ENCODE measurements at regions of chr2 and their contacts with region 1.

Region 1: GRCh38 chr2:182666674-182667314 is 49.3 kb upstream of the DNAJC10 start:
- DNase-seq: peak; percentile 41
- CTCF ChIP-seq: peak; percentile 49

Region 2: DNA sequence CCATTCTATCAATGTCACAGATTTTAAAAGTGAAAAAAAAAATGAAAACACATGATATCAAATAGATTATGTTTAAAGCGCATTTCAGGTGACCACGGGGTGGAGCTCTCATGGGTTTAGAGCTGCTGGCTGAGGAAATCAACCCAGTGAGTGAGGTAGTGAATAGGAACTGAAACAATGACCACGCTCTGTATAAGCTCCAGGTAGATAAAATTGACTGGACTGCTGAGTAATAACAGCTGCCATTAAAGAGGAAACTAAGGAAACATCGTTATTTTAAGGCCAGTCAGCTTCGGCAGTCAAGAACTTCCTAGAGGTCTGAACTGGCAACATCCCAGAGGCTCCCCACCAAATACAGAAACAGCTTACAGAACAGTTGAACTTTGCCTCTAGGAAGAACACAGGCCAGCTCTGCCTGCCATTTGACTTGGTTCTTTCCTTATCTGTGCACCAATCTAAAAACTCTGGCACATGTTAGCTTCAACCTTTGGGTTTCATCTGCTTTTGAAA is 425.9 kb before region 1 on chr2:
- CTCF ChIA-PET with region 1: interaction called, 10 read pairs
- POLR2A ChIA-PET with region 1: no interaction called
- DNase-seq: peak; percentile 69
- CTCF ChIP-seq: peak; percentile 64

Region 3: DNA sequence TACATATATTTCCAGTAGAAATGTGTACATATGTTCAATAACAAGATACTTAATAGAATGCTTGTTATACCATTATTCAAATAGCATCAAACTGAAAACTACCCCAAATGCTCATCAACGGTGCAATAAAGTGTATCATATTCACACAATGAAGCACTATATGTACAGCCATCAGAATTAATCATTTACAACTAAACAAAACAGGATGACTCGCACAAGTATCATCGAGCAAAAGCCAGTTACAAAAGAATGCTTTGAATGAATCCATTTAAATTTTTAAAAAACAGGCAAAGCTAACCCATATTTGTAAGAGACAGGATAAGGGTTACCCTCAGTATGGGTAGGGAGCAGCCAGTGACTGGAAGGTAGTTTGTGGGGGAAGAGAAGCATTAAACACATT is 107.2 kb before region 1 on chr2:
- CTCF ChIA-PET with region 1: no interaction called
- POLR2A ChIA-PET with region 1: no interaction called
- DNase-seq: no peak
- CTCF ChIP-seq: no peak

Region 4: DNA sequence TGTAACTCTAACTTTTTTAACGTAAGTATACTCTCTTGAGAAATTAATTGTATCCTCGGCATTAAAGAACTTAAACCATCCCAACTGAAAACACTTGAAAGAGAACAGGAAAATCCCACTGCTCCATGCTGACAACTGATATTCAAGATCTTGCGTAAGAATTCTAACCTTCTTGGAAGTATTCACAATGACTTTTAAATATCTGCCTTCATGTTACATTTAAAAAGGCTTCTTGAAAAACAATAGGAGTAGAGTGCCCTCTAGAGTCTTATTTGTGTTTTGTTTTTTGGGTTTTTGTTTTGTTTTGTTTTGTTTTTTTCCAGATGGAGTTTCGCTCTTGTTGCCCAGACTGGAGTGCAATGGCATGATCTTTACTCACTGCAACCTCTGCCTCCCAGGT is 16.1 kb before region 1 on chr2:
- CTCF ChIA-PET with region 1: interaction called, 11 read pairs
- POLR2A ChIA-PET with region 1: no interaction called
- DNase-seq: no peak
- CTCF ChIP-seq: peak; percentile 31

Region 5: DNA sequence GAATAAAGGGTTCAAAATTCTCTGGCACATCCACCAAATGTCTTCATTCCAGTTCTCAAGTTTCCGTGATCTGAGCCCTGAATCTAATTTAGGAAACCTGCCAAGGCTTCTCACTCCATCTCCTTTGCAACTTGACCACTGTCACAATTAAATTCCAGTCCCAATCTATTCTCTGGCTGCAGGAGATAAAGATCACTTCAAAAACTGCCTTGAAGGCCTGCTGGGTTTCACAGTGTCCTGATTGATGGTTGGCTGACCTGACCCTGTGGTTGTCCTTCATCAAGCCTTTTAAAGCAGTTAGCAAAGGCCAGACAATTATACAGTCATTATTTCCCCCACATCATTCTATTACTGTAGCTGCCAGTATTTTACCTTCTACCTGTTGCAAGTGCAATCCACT is 11.0 kb before region 1 on chr2:
- CTCF ChIA-PET with region 1: interaction called, 11 read pairs
- POLR2A ChIA-PET with region 1: no interaction called
- DNase-seq: no peak
- CTCF ChIP-seq: no peak

Region 6: GRCh38 chr2:182894174-182894573 is 227.4 kb after region 1 on chr2:
- CTCF ChIA-PET with region 1: no interaction called
- POLR2A ChIA-PET with region 1: no interaction called
- DNase-seq: no peak
- CTCF ChIP-seq: no peak

Region 7: DNA sequence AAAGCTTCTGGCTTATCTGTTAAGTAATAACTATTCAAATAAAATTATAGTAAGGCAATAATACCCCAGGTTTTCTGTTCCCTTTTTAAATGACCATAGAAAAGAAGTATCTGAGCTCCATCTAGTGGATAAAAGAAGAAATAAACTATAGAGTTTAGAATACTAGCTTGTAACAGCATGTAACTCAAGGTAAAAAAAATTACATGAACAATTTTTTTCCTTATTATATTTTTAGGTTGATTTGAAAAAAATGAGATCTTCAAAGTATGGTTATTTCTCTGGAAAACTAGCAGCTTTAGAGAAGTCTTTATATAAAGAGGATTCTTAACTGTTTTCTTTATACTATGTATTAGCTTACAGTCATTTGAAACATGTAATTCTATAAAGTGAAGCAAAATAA is 313.3 kb after region 1 on chr2:
- CTCF ChIA-PET with region 1: interaction called, 40 read pairs
- POLR2A ChIA-PET with region 1: no interaction called
- DNase-seq: peak; percentile 39
- CTCF ChIP-seq: peak; percentile 48

Measured in GM10248 (cell line).